Breast epithelium (tissue), 4 donors: ENCODE measurements at regions of chr4 and their contacts with region 1.

Region 1: DNA sequence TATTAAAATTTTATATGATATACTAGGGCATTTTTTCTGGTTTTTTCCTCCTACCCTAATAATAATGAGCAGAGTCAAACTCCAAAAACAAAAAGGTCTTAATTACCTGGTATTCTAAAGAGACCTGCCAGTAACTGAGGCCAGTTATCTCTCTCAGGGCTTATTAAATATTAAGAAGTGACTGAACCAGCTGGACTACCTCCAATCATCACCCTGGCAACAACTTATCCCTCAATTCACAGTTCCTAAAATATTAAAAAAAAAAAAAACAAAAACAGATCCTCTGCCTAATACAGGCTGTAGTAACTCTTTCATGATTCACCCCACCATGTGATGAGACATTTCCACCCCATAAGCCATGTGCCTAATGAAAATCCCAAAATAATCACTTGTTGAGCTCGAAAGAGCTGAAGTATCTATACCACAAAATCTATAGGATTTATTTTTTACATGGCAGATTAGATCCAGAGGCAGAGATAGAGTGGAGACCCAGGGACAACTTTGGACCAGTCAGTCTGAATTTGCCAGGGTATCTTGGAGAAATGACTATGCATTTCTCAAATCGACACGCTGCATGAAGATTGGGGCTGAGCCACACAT is 698.0 kb downstream of the FAT4 start:
- DNase-seq: no peak
- H3K4me3 ChIP-seq: no peak overlapping the region
- H3K27ac ChIP-seq: no peak overlapping the region
- H3K4me1 ChIP-seq: no peaks in the 10 kb centered on the region
- H3K27me3 ChIP-seq: no peaks in the 10 kb centered on the region
- CTCF ChIP-seq: no peak
- POLR2A ChIP-seq: no peak

Region 2: DNA sequence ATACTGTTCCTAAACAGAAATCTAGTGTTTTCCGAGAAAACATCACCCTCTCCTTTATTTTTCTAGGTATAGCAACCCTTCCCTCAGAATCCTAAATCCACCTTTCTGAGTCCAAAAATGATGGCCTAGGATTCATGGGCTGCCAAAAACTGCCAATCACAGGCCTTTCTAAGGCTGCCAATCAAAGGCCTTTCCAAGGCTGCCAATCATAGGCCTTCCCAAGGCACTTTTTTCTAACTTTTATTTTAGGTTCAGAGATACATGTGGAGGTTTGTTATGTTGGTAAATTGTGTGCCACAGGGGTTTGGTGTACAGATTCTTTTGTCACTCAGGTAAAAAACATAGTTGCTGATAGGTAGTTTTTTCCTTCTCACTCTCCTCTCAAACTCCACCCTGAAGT is 24.3 kb before region 1 on chr4:
- intact Hi-C with region 1: loop called (anchors 1 kb)
- DNase-seq: no peak
- H3K4me3 ChIP-seq: no peak overlapping the region
- H3K27ac ChIP-seq: no peak overlapping the region
- H3K4me1 ChIP-seq: no peaks in the 10 kb centered on the region
- H3K27me3 ChIP-seq: no peaks in the 10 kb centered on the region
- CTCF ChIP-seq: no peak
- POLR2A ChIP-seq: no peak

Region 3: DNA sequence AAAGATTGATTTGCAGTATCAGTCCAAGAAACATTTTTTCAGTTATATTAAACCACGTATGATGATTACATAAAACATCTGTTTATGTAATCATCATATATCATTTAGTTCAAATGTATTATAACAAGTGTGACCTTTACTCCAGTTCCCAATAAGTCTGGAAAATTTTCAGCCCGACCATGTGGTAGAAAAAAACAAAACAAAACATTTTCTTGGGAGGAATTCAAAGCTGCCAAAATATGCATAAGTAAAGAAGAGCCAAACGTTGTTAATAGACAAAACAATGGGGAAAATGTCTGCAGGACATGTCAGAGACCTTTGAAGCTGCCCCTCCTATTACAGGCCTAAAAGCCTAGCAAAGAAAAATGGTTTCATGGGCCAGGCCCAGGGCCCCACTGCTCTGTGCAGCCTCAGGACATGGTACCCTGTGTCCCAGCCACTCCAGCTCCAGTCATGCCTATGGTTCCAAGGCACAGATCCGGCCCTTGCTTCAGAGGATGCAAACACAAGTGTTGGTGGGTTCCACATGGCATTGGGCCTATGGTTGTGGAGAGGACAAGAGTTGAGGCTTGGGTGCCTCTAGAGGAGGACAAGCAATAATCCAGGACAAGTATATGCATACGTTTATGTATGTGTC is 11.2 kb after region 1 on chr4:
- intact Hi-C with region 1: no loop called
- DNase-seq: no peak
- H3K4me3 ChIP-seq: no peak overlapping the region
- H3K27ac ChIP-seq: no peak overlapping the region
- H3K4me1 ChIP-seq: no peaks in the 10 kb centered on the region
- H3K27me3 ChIP-seq: no peaks in the 10 kb centered on the region
- CTCF ChIP-seq: no peak
- POLR2A ChIP-seq: no peak

Region 4: DNA sequence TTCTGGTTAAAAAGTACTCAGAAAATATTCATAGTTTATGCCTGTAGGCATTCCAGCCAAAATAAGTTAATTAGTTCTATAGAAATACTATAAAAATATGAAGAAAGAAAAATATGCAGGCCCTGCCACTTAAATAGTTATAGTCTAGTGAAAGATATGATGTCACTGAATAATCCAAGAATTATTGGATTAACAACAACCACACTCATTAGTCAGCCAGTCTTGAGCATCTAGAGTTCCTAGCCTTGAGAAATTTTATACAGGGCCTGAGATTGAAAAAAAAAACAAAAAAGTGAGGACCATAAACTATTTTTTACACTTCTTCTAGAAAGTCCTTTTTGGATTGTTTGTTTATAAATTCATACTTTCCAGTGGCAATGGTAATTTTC is 125.0 kb after region 1 on chr4:
- intact Hi-C with region 1: no loop called
- DNase-seq: no peak
- H3K4me3 ChIP-seq: no peak overlapping the region
- H3K27ac ChIP-seq: no peak overlapping the region
- H3K4me1 ChIP-seq: no peaks in the 10 kb centered on the region
- H3K27me3 ChIP-seq: no peaks in the 10 kb centered on the region
- CTCF ChIP-seq: no peak
- POLR2A ChIP-seq: no peak